ENCODE measurements at regions of chrX and their contacts with region 1.

Region 1: GRCh38 chrX:64205735-64206491 is 405 bp upstream of the AMER1 start:
- DNase-seq: peak; percentile 91 to 93
- H3K4me3 ChIP-seq: peak overlapping the region; percentile 65 to 73 (median 67)
- H3K27ac ChIP-seq: peak overlapping the region; percentile 86 to 91
- H3K4me1 ChIP-seq: no peaks in the 10 kb centered on the region
- H3K27me3 ChIP-seq: peaks cover 0 to 38% of the 10 kb centered on the region in 2 donors
- CTCF ChIP-seq: no peak
- POLR2A ChIP-seq: peak; percentile 47

Region 2: DNA sequence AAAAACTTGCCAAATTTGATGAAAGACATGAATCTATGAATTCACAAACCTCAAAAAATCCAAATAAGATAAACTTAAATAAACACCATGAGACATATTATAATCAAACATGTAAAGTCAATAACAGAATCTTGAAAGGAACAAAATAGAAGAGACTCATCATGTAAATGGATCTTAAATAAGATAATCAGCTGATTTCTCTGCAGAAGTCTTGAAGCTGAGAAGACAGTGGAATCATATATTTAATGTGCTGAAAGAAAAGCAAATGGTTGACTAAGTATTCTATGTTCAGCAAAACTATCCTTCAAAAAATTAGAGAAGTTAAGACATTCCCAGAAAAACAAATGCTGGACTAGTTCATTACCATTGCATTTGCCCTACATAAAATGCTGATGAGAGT is 639.1 kb before region 1 on chrX:
- intact Hi-C with region 1: loop called (anchors 5 kb)
- DNase-seq: no peak
- H3K4me3 ChIP-seq: no peak overlapping the region
- H3K27ac ChIP-seq: no peak overlapping the region
- H3K4me1 ChIP-seq: no peaks in the 10 kb centered on the region
- H3K27me3 ChIP-seq: peaks cover 0 to 6% of the 10 kb centered on the region in 2 donors
- CTCF ChIP-seq: no peak
- POLR2A ChIP-seq: no peak

Region 3: DNA sequence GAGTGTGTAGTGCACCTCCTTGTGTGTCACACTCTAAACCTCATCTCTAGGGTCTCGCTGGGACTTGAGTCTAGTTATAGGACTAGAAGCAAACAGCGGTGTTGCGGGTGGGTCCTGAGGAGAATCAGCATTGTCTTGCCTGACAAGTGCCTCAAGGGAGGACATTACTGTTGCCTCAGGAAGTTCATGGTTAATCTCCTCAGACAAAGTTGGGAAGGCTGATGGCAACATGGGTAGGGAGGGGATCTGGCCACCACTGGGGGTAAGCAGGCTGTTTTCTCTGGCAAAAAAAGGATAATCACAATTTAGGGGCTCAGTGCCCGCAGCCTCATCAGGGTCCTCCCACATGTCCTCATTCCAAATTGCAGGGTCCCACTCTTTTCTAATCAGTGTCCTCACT is 12.1 kb after region 1 on chrX:
- intact Hi-C with region 1: no loop called
- DNase-seq: no peak
- H3K4me3 ChIP-seq: no peak overlapping the region
- H3K27ac ChIP-seq: no peak overlapping the region
- H3K4me1 ChIP-seq: no peaks in the 10 kb centered on the region
- H3K27me3 ChIP-seq: peaks cover 0 to 22% of the 10 kb centered on the region in 2 donors
- CTCF ChIP-seq: no peak
- POLR2A ChIP-seq: no peak

Region 4: DNA sequence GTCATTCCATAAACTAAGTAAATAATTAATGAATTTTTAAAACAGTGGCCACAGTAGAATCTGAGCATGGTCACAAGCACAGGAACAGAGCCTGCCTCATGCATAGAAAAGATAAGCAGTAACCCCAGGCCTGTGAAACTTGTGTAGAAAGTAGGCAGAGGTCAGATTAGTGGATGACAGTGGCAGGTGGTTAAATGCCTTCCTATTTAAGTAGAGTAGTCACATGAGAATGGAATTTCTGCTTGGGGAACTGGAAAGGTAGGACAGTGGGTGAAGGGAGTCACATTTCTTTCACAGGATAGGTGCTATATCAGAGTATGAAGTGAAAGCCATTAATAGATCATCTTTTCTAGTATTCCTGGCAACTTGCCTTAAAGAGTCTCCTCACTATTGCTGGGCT is 59.3 kb after region 1 on chrX:
- intact Hi-C with region 1: no loop called
- DNase-seq: no peak
- H3K4me3 ChIP-seq: no peak overlapping the region
- H3K27ac ChIP-seq: no peak overlapping the region
- H3K4me1 ChIP-seq: no peaks in the 10 kb centered on the region
- H3K27me3 ChIP-seq: peaks cover 0 to 10% of the 10 kb centered on the region in 2 donors
- CTCF ChIP-seq: no peak
- POLR2A ChIP-seq: no peak

Measured in breast epithelium (tissue), 4 donors.